ENCODE measurements at regions of chr14 and their contacts with region 1.

Region 1: GRCh38 chr14:63182968-63183367 is 21.3 kb upstream of the RHOJ start:
- DNase-seq: peak; percentile 95
- H3K4me3 ChIP-seq: no peak overlapping the region
- H3K27ac ChIP-seq: peak overlapping the region; percentile 79
- H3K4me1 ChIP-seq: peaks cover 50% of the 10 kb centered on the region
- H3K27me3 ChIP-seq: no peaks in the 10 kb centered on the region
- CTCF ChIP-seq: no peak
- POLR2A ChIP-seq: no peak

Region 2: GRCh38 chr14:63155511-63156189 is 27.3 kb before region 1 on chr14:
- CTCF ChIA-PET with region 1: no interaction called
- POLR2A ChIA-PET with region 1: no interaction called
- dilution Hi-C with region 1: no loop called
- intact Hi-C with region 1: loop called (anchors 1 kb)
- DNase-seq: peak; percentile 96
- H3K4me3 ChIP-seq: no peak overlapping the region
- H3K27ac ChIP-seq: peak overlapping the region; percentile 62
- H3K4me1 ChIP-seq: peaks cover 16% of the 10 kb centered on the region
- H3K27me3 ChIP-seq: no peaks in the 10 kb centered on the region
- CTCF ChIP-seq: no peak
- POLR2A ChIP-seq: no peak

Region 3: GRCh38 chr14:63224196-63224595 is 41.2 kb after region 1 on chr14:
- CTCF ChIA-PET with region 1: no interaction called
- POLR2A ChIA-PET with region 1: no interaction called
- dilution Hi-C with region 1: no loop called
- intact Hi-C with region 1: no loop called
- DNase-seq: no peak
- H3K4me3 ChIP-seq: no peak overlapping the region
- H3K27ac ChIP-seq: no peak overlapping the region
- H3K4me1 ChIP-seq: peaks cover 31% of the 10 kb centered on the region
- H3K27me3 ChIP-seq: no peaks in the 10 kb centered on the region
- CTCF ChIP-seq: no peak
- POLR2A ChIP-seq: no peak

Measured in endothelial cell of umbilical vein (primary cell).